Stomach (tissue), 19 donors: ENCODE measurements at regions of chr6 and their contacts with region 1.

Region 1: GRCh38 chr6:138817822-138818308 is 22.0 kb downstream of the ECT2L start:
- DNase-seq: peak; percentile 90 to 96
- H3K4me3 ChIP-seq: no peak overlapping the region
- H3K27ac ChIP-seq: peak overlapping the region; percentile 55 to 74 (median 60)
- H3K4me1 ChIP-seq: peaks cover 0 to 9% (median 2%) of the 10 kb centered on the region in 4 donors
- H3K27me3 ChIP-seq: no peaks in the 10 kb centered on the region
- CTCF ChIP-seq: no peak
- EP300 ChIP-seq: no peak
- POLR2A ChIP-seq: no peak

Region 2: DNA sequence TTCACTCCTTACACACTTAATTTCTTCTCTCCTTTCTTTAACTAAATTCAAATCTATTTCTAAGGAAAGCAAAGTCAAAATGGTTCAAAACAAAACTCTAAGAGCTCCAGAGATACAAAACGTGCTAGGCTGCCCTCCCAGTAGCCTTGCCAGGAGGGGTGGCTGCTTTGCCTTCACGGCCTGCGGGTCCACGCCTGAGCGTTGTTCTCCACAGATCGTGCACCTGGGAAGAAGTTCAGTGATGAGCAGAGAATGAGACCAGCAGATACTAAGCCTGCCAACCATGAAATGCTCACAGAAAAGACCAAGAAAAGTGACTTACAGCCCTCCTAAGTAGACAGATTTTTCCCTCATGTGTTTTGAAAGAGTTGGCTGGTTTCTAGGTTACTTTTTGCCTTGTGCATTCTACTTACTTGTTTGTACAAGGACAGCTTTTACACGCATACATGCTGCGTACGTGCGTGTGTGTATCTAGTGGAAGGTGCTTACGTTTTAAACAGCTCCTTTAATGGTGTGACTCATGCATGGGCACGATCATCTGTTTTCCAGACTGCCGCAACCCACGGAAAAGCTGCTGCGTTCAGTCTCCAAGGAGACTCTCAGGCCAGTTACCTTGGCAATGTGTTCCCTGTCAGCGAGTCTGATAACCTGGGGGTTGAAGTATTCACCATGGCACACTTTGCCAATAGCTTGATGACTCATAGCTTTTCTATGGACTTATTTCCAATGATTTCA is 567.2 kb before region 1 on chr6:
- intact Hi-C with region 1: no loop called
- DNase-seq: peak; percentile 85 to 92
- H3K4me3 ChIP-seq: no peak overlapping the region
- H3K27ac ChIP-seq: peak overlapping the region; percentile 76 to 96 (median 81)
- H3K4me1 ChIP-seq: peaks cover 0 to 30% (median 8%) of the 10 kb centered on the region in 4 donors
- H3K27me3 ChIP-seq: no peaks in the 10 kb centered on the region
- CTCF ChIP-seq: no peak
- EP300 ChIP-seq: no peak
- POLR2A ChIP-seq: no peak

Region 3: GRCh38 chr6:138882369-138883017 is 64.6 kb after region 1 on chr6:
- intact Hi-C with region 1: no loop called
- DNase-seq: no peak
- H3K4me3 ChIP-seq: no peak overlapping the region
- H3K27ac ChIP-seq: no peak overlapping the region
- H3K4me1 ChIP-seq: no peaks in the 10 kb centered on the region
- H3K27me3 ChIP-seq: no peaks in the 10 kb centered on the region
- CTCF ChIP-seq: no peak
- EP300 ChIP-seq: no peak
- POLR2A ChIP-seq: no peak

Region 4: DNA sequence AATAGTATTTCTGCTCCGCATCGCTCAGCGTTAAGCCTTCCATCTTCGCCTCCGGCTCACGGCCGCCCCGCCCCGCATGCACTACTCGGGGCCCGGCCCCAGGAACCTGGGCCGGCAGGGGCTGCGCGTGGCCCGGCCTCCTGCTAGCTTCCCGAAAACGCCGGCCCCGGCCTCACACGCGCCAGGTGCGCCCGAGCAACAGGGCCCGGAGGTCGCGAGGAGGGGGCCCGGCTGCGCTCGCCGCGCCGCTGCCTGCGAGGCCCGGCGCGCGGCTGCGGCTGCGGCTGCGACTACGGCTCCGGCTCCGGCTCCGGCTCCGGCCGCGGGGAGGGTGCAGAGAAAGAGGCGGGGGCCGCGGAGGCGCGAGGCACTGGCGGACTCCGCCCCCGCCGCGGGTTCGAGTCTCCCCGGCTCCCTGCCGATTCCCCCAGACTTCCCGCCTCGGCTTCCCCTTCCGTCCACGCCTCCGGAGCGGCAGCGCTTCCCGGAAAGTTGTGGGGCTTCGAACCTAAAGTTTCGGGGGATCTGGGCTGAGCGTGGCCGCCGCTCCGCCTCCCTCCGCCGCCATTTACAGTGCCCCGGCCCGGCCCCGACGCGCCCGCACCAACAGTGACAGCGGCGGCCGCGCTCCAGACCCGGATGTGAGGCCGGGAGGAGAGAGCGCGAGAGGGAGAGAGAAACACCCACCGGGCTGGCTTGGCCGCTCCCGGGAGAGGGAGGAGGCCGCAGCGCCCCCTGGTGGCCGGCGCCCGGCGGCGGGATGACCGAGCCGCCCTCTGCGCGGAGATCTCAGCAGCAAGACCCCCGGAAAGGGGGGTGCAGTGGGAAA is 170.0 kb after region 1 on chr6 and contains the start of gene REPS1:
- intact Hi-C with region 1: loop called (anchors 5 kb)
- DNase-seq: peak; percentile 94 to 97
- H3K4me3 ChIP-seq: peak within 1 kb of the TSS; percentile 85 to 92 (median 92)
- H3K27ac ChIP-seq: peak within 1 kb of the TSS; percentile 91 to 98 (median 92)
- H3K4me1 ChIP-seq: peaks cover 25 to 59% (median 52%) of the 10 kb centered on the region in 4 donors
- H3K27me3 ChIP-seq: no peaks in the 10 kb centered on the region
- CTCF ChIP-seq: peak in 5 of 7 experiments; percentile 79 to 100 (median 96)
- EP300 ChIP-seq: no peak
- POLR2A ChIP-seq: peak in 1 of 4 donors; percentile 32
- total RNA-seq, gene REPS1: 40.8 to 85.4 (median 43.8) TPM

Region 5: GRCh38 chr6:139364302-139364981 is 546.6 kb after region 1 on chr6:
- intact Hi-C with region 1: loop called (anchors 10 kb)
- DNase-seq: peak in 1 of 2 donors; percentile 76
- H3K4me3 ChIP-seq: no peak overlapping the region
- H3K27ac ChIP-seq: no peak overlapping the region
- H3K4me1 ChIP-seq: peaks cover 0 to 21% (median 12%) of the 10 kb centered on the region in 4 donors
- H3K27me3 ChIP-seq: no peaks in the 10 kb centered on the region
- CTCF ChIP-seq: peak in 5 of 7 experiments; percentile 36 to 80 (median 71)
- EP300 ChIP-seq: no peak
- POLR2A ChIP-seq: no peak